ENCODE measurements at regions of chr19 and their contacts with region 1.

Region 1: DNA sequence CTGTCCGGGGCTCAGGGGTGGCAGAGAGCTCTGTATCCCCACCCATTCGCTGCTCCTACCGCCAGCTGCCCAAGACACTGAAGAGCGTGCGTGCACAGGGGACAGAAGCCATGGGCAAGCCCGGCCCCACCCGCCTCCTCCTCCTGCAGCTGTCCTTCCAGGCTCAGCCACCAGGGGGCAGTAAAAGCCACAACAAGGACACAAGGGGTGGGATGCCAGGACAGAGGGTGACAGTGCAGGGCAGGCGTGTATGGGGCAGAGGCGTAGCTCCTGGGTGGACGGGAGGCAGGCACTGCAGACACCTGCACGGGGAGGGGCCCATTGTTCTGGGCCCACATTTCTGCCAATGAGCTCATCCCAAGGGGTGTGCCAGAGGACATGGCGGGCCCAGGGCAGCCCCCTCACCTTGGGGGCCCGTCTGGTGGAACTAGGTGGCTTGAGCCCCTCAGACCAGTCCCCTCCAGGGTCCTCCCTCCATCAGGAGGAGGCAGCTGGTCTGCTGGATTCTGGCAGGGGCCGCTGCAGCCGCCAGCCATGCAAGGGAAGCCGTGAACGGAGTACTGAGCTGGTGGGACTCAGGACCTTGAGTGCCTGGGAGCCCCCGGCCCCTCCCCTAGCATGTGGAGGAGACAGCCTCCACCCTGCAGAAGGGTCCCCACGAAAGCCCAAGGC is 61.1 kb downstream of the MLLT1 start:
- DNase-seq: peak; percentile 79
- H3K4me3 ChIP-seq: no peak overlapping the region
- H3K27ac ChIP-seq: peak overlapping the region; percentile 81
- H3K4me1 ChIP-seq: peaks cover 22% of the 10 kb centered on the region
- H3K27me3 ChIP-seq: no peaks in the 10 kb centered on the region
- CTCF ChIP-seq: peak; percentile 87 to 91
- POLR2A ChIP-seq: no peak

Region 2: DNA sequence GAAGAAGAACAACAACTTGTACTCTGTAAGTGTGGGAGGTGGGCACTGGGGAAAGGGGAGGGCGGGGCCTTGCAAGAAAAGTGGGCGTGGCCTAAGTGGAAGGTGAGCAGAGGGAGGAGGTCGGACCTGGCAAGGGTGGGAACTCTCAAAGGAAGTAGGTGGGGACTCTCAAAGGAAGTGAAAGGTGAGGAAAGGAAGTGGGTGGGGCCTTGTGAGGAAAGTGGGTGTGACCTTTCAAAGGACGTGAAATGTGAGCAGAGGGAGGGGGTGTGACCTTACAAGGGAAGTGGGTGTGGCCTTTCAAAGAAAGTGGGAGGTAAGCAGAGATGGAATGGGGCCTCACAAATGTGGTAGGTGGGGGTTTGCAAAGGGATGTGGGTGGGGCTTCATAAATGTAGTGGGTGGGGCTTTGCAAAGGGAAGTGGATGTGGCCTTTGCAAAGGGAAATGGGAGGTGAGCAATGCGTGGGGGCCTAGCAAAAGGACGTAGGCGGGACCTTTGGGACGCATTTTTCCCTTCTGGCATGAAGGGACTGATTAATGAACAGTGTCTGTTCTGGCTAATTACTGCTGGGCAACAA is 57.3 kb before region 1 on chr19:
- CTCF ChIA-PET with region 1: interaction called, 4 read pairs
- POLR2A ChIA-PET with region 1: no interaction called
- dilution Hi-C with region 1: no loop called
- intact Hi-C with region 1: loop called (anchors 1 kb)
- DNase-seq: peak; percentile 7
- H3K4me3 ChIP-seq: no peak overlapping the region
- H3K27ac ChIP-seq: no peak overlapping the region
- H3K4me1 ChIP-seq: no peaks in the 10 kb centered on the region
- H3K27me3 ChIP-seq: no peaks in the 10 kb centered on the region
- CTCF ChIP-seq: no peak
- POLR2A ChIP-seq: no peak

Region 3: GRCh38 chr19:6238643-6239281 is 20.1 kb after region 1 on chr19:
- CTCF ChIA-PET with region 1: interaction called, 37 read pairs
- POLR2A ChIA-PET with region 1: no interaction called
- dilution Hi-C with region 1: no loop called
- intact Hi-C with region 1: loop called (anchors 1 kb)
- DNase-seq: no peak
- H3K4me3 ChIP-seq: no peak overlapping the region
- H3K27ac ChIP-seq: peak overlapping the region; percentile 99
- H3K4me1 ChIP-seq: peaks cover 68% of the 10 kb centered on the region
- H3K27me3 ChIP-seq: no peaks in the 10 kb centered on the region
- CTCF ChIP-seq: no peak
- POLR2A ChIP-seq: no peak

Region 4: DNA sequence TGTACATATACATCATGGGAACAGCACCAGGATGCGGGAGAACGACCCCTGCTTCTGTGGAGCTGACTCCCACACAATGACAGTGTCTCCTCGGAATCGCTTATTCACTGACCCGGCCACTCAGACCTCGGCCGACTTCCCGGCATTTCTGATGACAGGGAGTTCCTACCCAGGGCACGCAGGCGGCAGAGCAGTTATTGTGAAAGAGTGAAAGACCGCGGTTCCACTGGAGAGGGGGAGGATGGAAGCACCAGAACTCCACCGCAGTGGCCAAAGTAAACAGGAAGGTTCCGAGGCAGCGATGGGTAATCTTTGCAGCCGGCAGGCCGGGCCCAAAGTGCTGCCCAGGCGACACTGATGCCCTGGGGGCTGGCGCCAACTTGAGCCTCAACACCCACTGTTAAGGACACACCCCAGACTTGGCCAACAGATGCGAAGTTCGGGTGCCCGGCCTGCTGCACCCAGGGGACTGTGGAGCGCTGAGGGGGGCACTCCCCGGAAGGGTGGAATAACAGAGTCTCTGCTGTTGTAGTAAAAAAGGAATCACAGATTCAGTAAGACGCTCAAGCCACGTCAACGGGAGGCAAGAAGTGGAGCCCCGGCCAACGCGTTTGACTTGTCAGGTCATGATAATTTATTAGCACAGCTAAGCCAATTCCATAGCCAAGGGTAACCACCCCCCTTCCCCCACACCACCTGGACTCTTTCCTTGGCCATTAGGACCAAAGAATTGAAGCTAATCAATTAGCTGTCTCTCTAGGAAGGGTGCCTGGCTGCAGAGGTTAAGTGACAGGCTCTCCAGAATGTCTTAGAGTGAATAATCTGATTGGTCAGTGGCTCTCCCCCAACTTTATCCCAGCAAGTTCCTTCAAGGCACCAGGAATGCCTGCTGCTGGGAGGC is 55.3 kb after region 1 on chr19:
- CTCF ChIA-PET with region 1: interaction called, 42 read pairs
- POLR2A ChIA-PET with region 1: no interaction called
- dilution Hi-C with region 1: loop called (anchors 10 kb)
- intact Hi-C with region 1: loop called (anchors 2 kb)
- DNase-seq: peak; percentile 83
- H3K4me3 ChIP-seq: peak overlapping the region in 1 of 3 experiments; percentile 0
- H3K27ac ChIP-seq: peak overlapping the region; percentile 90
- H3K4me1 ChIP-seq: peaks cover 80% of the 10 kb centered on the region
- H3K27me3 ChIP-seq: no peaks in the 10 kb centered on the region
- CTCF ChIP-seq: no peak
- POLR2A ChIP-seq: no peak

Region 5: GRCh38 chr19:6287269-6287885 is 68.8 kb after region 1 on chr19:
- CTCF ChIA-PET with region 1: interaction called, 12 read pairs
- POLR2A ChIA-PET with region 1: no interaction called
- dilution Hi-C with region 1: no loop called
- intact Hi-C with region 1: no loop called
- DNase-seq: no peak
- H3K4me3 ChIP-seq: no peak overlapping the region
- H3K27ac ChIP-seq: no peak overlapping the region
- H3K4me1 ChIP-seq: no peaks in the 10 kb centered on the region
- H3K27me3 ChIP-seq: no peaks in the 10 kb centered on the region
- CTCF ChIP-seq: no peak
- POLR2A ChIP-seq: no peak

Region 6: GRCh38 chr19:6354098-6354674 is 135.6 kb after region 1 on chr19:
- CTCF ChIA-PET with region 1: interaction called, 16 read pairs
- POLR2A ChIA-PET with region 1: no interaction called
- dilution Hi-C with region 1: no loop called
- intact Hi-C with region 1: no loop called
- DNase-seq: no peak
- H3K4me3 ChIP-seq: no peak overlapping the region
- H3K27ac ChIP-seq: no peak overlapping the region
- H3K4me1 ChIP-seq: no peaks in the 10 kb centered on the region
- H3K27me3 ChIP-seq: no peaks in the 10 kb centered on the region
- CTCF ChIP-seq: peak; percentile 15 to 51
- POLR2A ChIP-seq: no peak